Transverse colon (tissue), 4 donors: ENCODE measurements at regions of chr15 and their contacts with region 1.

Region 1: DNA sequence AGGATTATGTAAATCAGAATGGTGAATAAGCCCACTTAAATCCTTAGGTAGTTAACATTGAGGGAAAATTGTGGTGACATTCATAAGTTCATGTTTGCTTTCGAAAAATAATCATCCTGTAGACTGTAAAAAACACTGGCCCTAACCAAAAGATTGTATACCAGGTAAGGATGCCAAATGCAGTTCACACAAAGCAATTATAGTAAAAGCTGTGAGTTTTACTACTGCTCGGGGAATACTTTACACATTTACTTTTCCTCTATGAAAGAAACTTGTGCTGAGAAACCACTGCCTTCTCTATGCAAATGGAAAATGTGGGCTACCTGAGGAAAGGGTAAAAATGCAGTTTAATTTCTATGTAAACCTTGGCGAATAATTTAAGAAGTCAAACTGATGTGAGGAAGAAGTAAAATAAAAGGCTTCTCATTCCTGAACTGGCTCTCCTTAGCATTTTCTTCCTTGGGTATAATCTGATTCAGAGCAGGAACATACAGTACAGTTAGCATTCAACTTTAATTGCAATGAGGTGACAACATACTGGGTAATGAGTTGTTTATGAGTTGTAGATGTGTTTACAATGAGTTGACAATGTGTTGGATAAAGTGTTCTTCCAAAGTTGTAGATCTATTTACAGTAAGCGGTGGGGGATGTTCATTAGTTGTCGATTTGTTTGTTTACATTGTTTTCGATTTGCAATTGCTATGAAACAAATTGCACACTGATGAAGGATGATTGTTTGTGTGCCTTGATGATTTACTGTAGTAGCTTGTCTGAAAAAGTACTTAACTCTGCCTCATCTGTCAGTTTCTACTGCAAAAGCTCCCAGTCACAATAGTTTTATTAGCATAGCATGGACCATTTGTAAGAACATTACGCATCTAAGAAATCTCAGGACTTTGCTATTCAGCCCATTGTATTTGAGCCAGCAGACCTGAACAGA is 453.0 kb upstream of the DPH6 start:
- DNase-seq: no peak
- H3K4me3 ChIP-seq: no peak overlapping the region
- H3K27ac ChIP-seq: no peak overlapping the region
- H3K4me1 ChIP-seq: no peaks in the 10 kb centered on the region
- H3K27me3 ChIP-seq: no peaks in the 10 kb centered on the region
- CTCF ChIP-seq: no peak
- EP300 ChIP-seq: no peak
- POLR2A ChIP-seq: no peak

Region 2: DNA sequence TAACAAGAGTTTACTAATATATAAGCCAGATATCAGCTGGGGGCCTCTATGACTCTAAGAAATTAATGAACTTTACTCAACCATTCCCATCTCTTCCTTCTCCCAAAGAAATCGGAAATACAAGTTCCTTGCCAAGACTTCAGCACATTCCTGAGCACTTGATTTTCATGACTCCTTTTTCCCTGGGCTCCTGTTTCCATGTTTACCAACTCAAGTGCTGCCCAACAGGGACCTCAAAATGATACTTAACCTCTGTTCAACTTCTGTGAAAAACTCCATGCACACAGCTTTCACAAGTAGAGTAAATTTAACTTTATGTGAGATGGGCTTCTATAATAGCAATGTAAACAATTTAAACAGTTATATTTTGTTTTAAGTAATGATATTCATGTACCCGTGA is 264.7 kb after region 1 on chr15:
- in situ Hi-C with region 1: no loop called
- intact Hi-C with region 1: no loop called
- DNase-seq: no peak
- H3K4me3 ChIP-seq: no peak overlapping the region
- H3K27ac ChIP-seq: no peak overlapping the region
- H3K4me1 ChIP-seq: no peaks in the 10 kb centered on the region
- H3K27me3 ChIP-seq: no peaks in the 10 kb centered on the region
- CTCF ChIP-seq: no peak
- EP300 ChIP-seq: no peak
- POLR2A ChIP-seq: no peak

Region 3: DNA sequence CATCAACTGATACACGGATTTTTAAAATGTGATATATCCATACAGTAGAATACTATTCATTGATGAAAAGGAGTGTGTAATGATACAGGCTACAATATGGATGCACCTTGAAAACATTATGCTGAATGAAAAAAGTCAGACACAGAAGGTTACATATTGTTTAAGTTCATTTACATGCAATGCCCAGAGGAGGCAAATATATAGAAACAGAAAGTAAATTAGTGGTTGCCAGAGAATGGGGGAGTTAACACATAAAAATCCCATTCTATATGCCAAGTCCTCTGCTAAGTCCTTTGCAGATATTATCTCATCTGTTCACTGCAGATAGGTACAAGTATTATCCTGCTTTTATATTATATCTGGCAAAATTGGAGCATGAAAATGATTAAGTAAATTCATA is 558.4 kb after region 1 on chr15:
- in situ Hi-C with region 1: no loop called
- intact Hi-C with region 1: loop called (anchors 5 kb)
- DNase-seq: no peak
- H3K4me3 ChIP-seq: no peak overlapping the region
- H3K27ac ChIP-seq: no peak overlapping the region
- H3K4me1 ChIP-seq: no peaks in the 10 kb centered on the region
- H3K27me3 ChIP-seq: no peaks in the 10 kb centered on the region
- CTCF ChIP-seq: no peak
- EP300 ChIP-seq: no peak
- POLR2A ChIP-seq: no peak